Left ventricle myocardium superior (tissue), 1 donor: ENCODE measurements at regions of chr6 and their contacts with region 1.

Region 1: GRCh38 chr6:42453031-42453653 is 1.4 kb upstream of the TRERF1 start:
- DNase-seq: peak; percentile 93
- ATAC-seq: peak; percentile 93

Region 2: GRCh38 chr6:42390228-42390934 is 62.8 kb before region 1 on chr6:
- intact Hi-C with region 1: no loop called
- DNase-seq: no peak
- ATAC-seq: no peak

Region 3: DNA sequence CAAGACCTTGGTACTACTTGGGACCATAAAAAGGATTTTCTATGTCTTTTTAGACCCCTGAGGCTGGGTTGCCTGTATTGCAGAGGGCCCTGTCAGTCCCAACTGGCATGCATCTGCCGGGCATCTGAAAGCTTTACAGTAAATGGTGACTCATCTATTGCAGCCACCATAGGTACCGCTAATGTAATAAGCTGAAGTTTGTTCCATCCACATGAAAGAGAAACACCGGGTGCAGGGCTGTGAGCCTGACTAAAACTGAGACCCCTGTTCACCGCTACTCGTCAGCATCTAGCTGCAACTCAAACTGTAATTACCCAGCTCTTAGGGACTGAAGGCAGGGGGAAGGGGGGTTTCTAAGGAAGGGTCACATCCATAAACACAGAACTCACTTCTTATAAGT is 51.0 kb before region 1 on chr6:
- intact Hi-C with region 1: loop called (anchors 10 kb)
- DNase-seq: no peak
- ATAC-seq: no peak

Region 4: DNA sequence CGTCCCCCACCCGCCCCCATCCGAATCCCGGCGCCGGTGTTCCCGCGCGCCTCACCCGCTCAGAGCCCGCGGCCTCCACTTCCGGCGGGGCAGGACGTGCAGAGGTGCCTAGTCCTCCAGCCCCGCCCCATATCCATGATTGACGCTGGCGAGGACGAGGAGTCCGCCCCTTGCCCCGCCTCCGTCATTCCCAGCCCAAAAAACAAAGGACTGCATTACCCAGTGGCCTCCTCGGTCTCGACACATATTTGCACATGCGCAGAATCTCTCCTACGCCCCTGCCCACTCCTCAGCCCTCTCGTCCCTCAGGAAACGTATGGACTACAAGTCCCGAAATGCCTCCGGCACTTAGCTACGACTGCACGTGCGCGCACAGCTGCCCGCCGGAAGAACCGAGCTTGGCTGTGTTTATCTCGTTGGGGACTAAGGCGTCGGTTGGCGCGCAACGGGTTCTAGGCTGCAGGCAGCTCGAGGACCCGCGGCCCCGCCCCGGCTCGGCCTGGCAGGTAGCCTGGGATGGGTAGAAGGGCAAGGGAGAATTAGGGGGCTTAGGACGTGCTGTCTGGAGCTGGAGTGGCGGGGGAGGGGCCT is 560.8 kb after region 1 on chr6 and contains the starts of genes KLHDC3 and MEA1:
- intact Hi-C with region 1: no loop called
- DNase-seq: peak; percentile 98
- ATAC-seq: peak; percentile 90
- total RNA-seq, gene KLHDC3: 167 TPM
- total RNA-seq, gene MEA1: 28.7 TPM